Activated naive CD4-positive, alpha-beta T cell treated with anti-CD3 and anti-CD28 coated beads for 36 hours (primary cell): ENCODE measurements at regions of chr5 and their contacts with region 1.

Region 1: DNA sequence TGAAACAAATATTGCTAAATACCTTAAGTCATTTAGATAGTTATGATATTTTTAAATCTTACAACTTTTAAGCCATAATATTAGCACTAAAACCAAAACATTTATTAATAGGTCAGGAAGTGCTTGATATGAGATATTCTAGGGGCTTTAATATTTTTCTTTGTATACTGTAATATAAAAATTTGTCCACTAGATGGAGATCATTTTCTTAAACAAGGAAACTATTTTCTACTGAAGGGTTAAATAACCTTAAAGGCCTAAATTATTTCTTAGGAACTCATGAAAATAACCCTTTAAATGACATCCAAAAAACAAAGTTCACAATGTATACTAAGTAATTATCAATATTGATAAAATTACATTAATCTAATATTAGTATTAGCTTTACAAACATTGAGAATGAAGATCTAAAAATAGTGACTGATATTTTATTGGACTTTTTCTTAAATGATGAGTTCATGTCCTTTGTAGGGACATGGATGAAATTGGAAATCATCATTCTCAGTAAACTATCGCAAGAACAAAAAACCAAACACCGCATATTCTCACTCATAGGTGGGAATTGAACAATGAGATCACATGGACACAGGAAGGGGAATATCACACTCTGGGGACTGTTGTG is 635.7 kb downstream of the RAB3C start:
- DNase-seq: no peak
- H3K4me3 Mint-ChIP-seq: no peak overlapping the region
- H3K27ac Mint-ChIP-seq: no peak overlapping the region
- H3K4me1 Mint-ChIP-seq: no peaks in the 10 kb centered on the region
- H3K27me3 Mint-ChIP-seq: peaks cover 5% of the 10 kb centered on the region

Region 2: GRCh38 chr5:59380350-59380951 is 161.9 kb after region 1 on chr5:
- CTCF ChIA-PET with region 1: interaction called, 16 read pairs
- intact Hi-C with region 1: loop called (anchors 1 kb)
- DNase-seq: peak; percentile 15
- H3K4me3 Mint-ChIP-seq: no peak overlapping the region
- H3K27ac Mint-ChIP-seq: no peak overlapping the region
- H3K4me1 Mint-ChIP-seq: no peaks in the 10 kb centered on the region
- H3K27me3 Mint-ChIP-seq: no peaks in the 10 kb centered on the region